HEK293T (cell line): ENCODE measurements at regions of chr12 and their contacts with region 1.

Region 1: GRCh38 chr12:55728939-55729823 is at the start of gene CD63:
- DNase-seq: peak; percentile 73

Region 2: DNA sequence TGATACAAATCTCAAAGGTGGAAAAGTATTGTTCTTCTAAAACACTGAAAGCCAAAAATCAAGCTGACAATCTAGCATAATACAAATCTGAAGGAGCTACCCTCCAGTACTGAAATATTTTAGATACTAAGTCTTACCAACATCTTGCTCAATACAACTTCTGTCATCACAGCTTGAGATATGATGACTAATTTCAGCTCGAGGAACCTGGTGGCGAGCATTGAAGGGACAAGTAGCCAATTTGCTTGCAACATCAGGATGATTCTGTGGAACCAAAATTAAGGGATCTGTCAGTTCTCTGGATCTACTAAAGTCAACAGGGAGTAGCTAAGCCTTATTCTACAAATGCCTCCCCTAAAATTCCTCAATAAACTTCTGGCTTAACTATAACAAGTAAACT is 1266.1 kb before region 1 on chr12:
- CTCF ChIA-PET with region 1: no interaction called
- POLR2A ChIA-PET with region 1: no interaction called
- DNase-seq: no peak

Region 3: DNA sequence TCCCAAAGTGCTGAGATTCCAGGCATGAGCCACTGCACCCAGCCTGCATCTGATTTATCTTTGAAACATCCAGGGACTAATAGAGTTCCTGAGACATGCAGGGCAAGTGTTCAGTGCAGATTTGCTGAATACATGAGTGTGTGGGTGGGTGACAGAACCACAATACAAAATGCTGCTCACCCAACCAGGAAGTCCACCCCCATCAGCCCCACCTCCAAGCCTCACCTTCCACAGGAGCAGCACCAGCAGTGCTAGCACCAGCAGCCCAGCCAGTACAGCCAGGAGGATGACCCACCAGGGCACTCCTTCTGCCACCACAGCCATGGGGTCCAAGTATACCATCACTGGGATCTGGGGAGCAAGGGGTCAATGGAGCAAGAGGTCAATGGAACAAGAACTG is 41.4 kb before region 1 on chr12:
- CTCF ChIA-PET with region 1: no interaction called
- POLR2A ChIA-PET with region 1: no interaction called
- DNase-seq: no peak

Region 4: GRCh38 chr12:55715833-55716581 is 13.2 kb before region 1 on chr12 and contains the start of gene BLOC1S1:
- CTCF ChIA-PET with region 1: interaction called, 10 read pairs
- POLR2A ChIA-PET with region 1: interaction called, 30 read pairs
- DNase-seq: peak; percentile 92

Region 5: GRCh38 chr12:55817346-55818139 is 88.4 kb after region 1 on chr12 and contains the starts of genes ORMDL2 and SARNP:
- CTCF ChIA-PET with region 1: interaction called, 3 read pairs
- POLR2A ChIA-PET with region 1: interaction called, 14 read pairs
- DNase-seq: peak; percentile 96